B cell (primary cell): ENCODE measurements at regions of chr11 and their contacts with region 1.

Region 1: DNA sequence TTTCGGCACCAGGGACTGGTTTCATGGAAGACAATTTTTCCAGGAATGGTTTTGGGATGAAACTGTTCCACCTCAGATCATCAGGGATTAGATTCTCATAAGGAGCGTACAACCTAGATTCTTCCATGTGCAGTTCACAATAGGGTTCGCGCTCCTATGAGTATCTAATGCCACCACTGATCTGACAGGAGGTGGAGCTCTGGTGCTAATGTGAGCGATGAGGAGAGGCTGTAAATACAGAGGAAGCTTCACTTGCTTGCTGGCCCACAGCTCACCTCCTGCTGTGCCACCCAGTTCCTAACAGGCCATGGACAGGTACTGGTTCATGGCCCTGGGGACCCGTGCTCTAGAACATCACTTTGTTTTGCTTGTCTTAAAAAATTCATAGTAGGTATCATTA is 41.8 kb upstream of the AMPD3 start:
- DNase-seq: peak; percentile 83
- ATAC-seq: peak; percentile 88
- H3K4me3 ChIP-seq: no peak overlapping the region
- H3K4me3 Mint-ChIP-seq: no peak overlapping the region
- H3K27ac ChIP-seq: no peak overlapping the region
- H3K27ac Mint-ChIP-seq: no peak overlapping the region
- H3K4me1 ChIP-seq: peaks cover 19 to 26% of the 10 kb centered on the region in 2 donors
- H3K4me1 Mint-ChIP-seq: peaks cover 26% of the 10 kb centered on the region
- H3K27me3 ChIP-seq: no peaks in the 10 kb centered on the region
- H3K27me3 Mint-ChIP-seq: no peaks in the 10 kb centered on the region
- CTCF ChIP-seq: peak; percentile 59

Region 2: DNA sequence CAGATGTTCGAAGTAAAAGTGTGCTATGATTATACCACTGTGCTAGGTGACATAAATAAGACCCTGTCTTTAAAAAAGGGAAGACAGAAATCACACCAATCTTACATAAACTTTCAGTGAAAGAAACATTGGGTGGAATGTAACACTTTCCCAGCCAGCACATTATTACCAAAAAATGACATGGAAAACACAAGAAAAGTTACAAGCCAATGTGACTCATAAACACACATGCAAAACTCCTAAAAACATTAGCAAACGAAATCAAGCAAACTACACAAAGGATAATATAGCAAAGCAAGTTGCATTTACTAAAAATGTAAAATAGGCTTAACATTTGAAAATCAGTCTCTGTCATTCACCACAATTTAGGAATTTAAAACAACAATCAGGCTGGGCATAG is 166.3 kb before region 1 on chr11:
- CTCF ChIA-PET with region 1: no interaction called
- POLR2A ChIA-PET with region 1: no interaction called
- intact Hi-C with region 1: no loop called
- DNase-seq: no peak
- ATAC-seq: no peak
- H3K4me3 ChIP-seq: no peak overlapping the region
- H3K4me3 Mint-ChIP-seq: no peak overlapping the region
- H3K27ac ChIP-seq: no peak overlapping the region
- H3K27ac Mint-ChIP-seq: no peak overlapping the region
- H3K4me1 ChIP-seq: no peaks in the 10 kb centered on the region
- H3K4me1 Mint-ChIP-seq: peaks cover 7% of the 10 kb centered on the region
- H3K27me3 ChIP-seq: no peaks in the 10 kb centered on the region
- H3K27me3 Mint-ChIP-seq: no peaks in the 10 kb centered on the region
- CTCF ChIP-seq: no peak

Region 3: DNA sequence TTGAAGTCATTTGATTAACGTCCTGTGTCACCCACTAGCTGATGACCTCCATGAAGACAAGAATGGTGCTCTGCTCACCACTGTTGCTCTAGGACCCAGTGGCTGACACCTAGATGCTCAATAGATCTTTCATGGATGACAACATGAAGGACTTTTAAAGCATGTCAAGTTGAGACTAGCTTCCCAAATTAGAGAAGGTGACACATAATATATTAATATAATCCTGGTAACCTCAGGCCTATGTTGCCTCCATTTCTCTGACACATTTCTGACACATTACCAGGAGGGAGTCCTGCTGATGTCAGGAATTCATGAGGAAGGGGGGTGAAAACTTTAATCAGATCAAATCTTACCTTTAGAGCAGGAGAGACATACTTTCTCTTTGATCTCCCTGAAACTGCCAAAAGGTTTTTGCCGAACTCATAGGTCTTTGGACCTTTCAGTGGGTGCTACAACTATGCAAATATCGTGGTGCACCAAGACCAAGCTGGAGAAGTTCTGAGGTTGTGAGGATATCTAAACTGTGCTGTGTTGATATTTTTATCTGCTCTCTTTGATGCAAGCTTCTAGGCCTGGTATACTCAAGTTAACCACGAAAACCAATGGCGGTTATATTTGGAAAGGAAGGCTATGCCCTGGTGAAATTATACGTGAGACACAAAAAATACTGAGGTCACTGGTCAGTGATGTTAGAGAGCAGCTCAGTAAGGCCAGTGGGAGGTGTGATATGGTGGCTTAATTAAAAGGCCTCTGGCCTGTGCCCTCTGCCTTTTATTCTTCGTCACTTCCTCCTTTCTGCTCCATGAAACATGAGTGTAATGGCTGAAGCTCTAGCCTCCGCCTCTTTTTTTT is 28.6 kb after region 1 on chr11:
- CTCF ChIA-PET with region 1: interaction called, 26 read pairs
- POLR2A ChIA-PET with region 1: interaction called, 6 read pairs
- intact Hi-C with region 1: no loop called
- DNase-seq: peak; percentile 85
- ATAC-seq: peak; percentile 89
- H3K4me3 ChIP-seq: peak overlapping the region in 2 of 5 experiments; percentile 1 to 20
- H3K4me3 Mint-ChIP-seq: peak overlapping the region; percentile 61
- H3K27ac ChIP-seq: peak overlapping the region; percentile 89 to 96
- H3K27ac Mint-ChIP-seq: peak overlapping the region; percentile 97
- H3K4me1 ChIP-seq: peaks cover 38 to 41% of the 10 kb centered on the region in 2 donors
- H3K4me1 Mint-ChIP-seq: peaks cover 39% of the 10 kb centered on the region
- H3K27me3 ChIP-seq: no peaks in the 10 kb centered on the region
- H3K27me3 Mint-ChIP-seq: no peaks in the 10 kb centered on the region
- CTCF ChIP-seq: no peak

Region 4: GRCh38 chr11:10490398-10491241 is 77.4 kb after region 1 on chr11:
- CTCF ChIA-PET with region 1: interaction called, 35 read pairs
- POLR2A ChIA-PET with region 1: interaction called, 3 read pairs
- intact Hi-C with region 1: loop called (anchors 1 kb)
- DNase-seq: no peak
- ATAC-seq: no peak
- H3K4me3 ChIP-seq: no peak overlapping the region
- H3K4me3 Mint-ChIP-seq: no peak overlapping the region
- H3K27ac ChIP-seq: peak overlapping the region; percentile 94 to 98
- H3K27ac Mint-ChIP-seq: peak overlapping the region; percentile 90
- H3K4me1 ChIP-seq: peaks cover 24 to 34% of the 10 kb centered on the region in 2 donors
- H3K4me1 Mint-ChIP-seq: peaks cover 39% of the 10 kb centered on the region
- H3K27me3 ChIP-seq: no peaks in the 10 kb centered on the region
- H3K27me3 Mint-ChIP-seq: no peaks in the 10 kb centered on the region
- CTCF ChIP-seq: no peak

Region 5: GRCh38 chr11:10526974-10527918 is 114.0 kb after region 1 on chr11:
- CTCF ChIA-PET with region 1: interaction called, 16 read pairs
- POLR2A ChIA-PET with region 1: no interaction called
- intact Hi-C with region 1: no loop called
- DNase-seq: no peak
- ATAC-seq: peak; percentile 77
- H3K4me3 ChIP-seq: no peak overlapping the region
- H3K4me3 Mint-ChIP-seq: peak overlapping the region; percentile 2
- H3K27ac ChIP-seq: peak overlapping the region in 1 of 2 donors; percentile 12
- H3K27ac Mint-ChIP-seq: peak overlapping the region; percentile 68
- H3K4me1 ChIP-seq: no peaks in the 10 kb centered on the region
- H3K4me1 Mint-ChIP-seq: peaks cover 19% of the 10 kb centered on the region
- H3K27me3 ChIP-seq: no peaks in the 10 kb centered on the region
- H3K27me3 Mint-ChIP-seq: no peaks in the 10 kb centered on the region
- CTCF ChIP-seq: no peak

Region 6: GRCh38 chr11:10653926-10654810 is 240.9 kb after region 1 on chr11:
- CTCF ChIA-PET with region 1: interaction called, 44 read pairs
- POLR2A ChIA-PET with region 1: no interaction called
- intact Hi-C with region 1: loop called (anchors 1 kb)
- DNase-seq: peak; percentile 79
- ATAC-seq: peak; percentile 69
- H3K4me3 ChIP-seq: peak overlapping the region in 1 of 5 experiments; percentile 1
- H3K4me3 Mint-ChIP-seq: no peak overlapping the region
- H3K27ac ChIP-seq: no peak overlapping the region
- H3K27ac Mint-ChIP-seq: peak overlapping the region; percentile 2
- H3K4me1 ChIP-seq: peaks cover 60 to 66% of the 10 kb centered on the region in 2 donors
- H3K4me1 Mint-ChIP-seq: peaks cover 82% of the 10 kb centered on the region
- H3K27me3 ChIP-seq: no peaks in the 10 kb centered on the region
- H3K27me3 Mint-ChIP-seq: no peaks in the 10 kb centered on the region
- CTCF ChIP-seq: peak; percentile 63

Region 7: DNA sequence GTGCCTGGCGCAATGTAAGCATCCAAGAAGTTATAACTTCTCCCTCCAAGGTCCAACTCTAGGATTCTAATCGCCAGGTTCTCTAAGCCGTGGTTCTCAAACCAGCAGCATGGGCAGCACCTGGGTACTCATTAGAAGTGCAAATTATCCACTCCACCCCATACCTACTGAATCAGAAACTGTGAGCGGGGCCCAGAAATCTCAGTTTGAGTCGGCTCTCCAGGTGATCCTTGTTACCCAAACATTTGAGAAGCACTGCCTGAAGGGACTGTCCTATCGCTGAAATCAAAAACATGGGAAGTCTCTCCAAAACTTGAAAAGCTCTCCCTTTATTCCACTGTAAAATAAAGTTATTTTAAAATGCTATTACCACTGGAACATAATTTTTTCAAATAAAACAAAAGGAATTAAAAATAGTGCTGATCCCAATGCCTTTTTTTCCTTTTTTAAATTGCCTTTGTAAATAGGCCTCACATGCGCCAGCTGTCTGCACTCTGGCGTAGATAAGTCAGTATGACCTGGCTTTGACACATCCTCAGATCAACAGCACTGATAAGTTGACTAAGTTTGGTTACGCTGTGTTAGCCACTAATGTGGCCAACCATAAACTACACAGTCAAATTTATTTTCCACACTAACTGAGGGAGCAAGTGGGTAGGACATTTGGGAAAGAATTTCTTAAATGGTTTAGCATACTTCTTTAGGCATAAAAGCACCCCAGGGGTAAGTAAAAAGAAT is 329.4 kb after region 1 on chr11:
- CTCF ChIA-PET with region 1: interaction called, 171 read pairs
- POLR2A ChIA-PET with region 1: no interaction called
- intact Hi-C with region 1: no loop called
- DNase-seq: no peak
- ATAC-seq: no peak
- H3K4me3 ChIP-seq: no peak overlapping the region
- H3K4me3 Mint-ChIP-seq: peak overlapping the region; percentile 29
- H3K27ac ChIP-seq: no peak overlapping the region
- H3K27ac Mint-ChIP-seq: peak overlapping the region; percentile 32
- H3K4me1 ChIP-seq: peaks cover 13 to 16% of the 10 kb centered on the region in 2 donors
- H3K4me1 Mint-ChIP-seq: peaks cover 23% of the 10 kb centered on the region
- H3K27me3 ChIP-seq: no peaks in the 10 kb centered on the region
- H3K27me3 Mint-ChIP-seq: no peaks in the 10 kb centered on the region
- CTCF ChIP-seq: no peak